Transverse colon (tissue), 4 donors: ENCODE measurements at regions of chr3 and their contacts with region 1.

Region 1: GRCh38 chr3:143644370-143645089 is 203.7 kb downstream of the SLC9A9 start:
- DNase-seq: peak; percentile 65
- H3K4me3 ChIP-seq: no peak overlapping the region
- H3K27ac ChIP-seq: peak overlapping the region in 3 of 4 donors; percentile 4 to 46 (median 29)
- H3K4me1 ChIP-seq: peaks cover 0 to 11% (median 2%) of the 10 kb centered on the region in 4 donors
- H3K27me3 ChIP-seq: no peaks in the 10 kb centered on the region
- CTCF ChIP-seq: peak; percentile 52 to 77 (median 61)
- EP300 ChIP-seq: no peak
- POLR2A ChIP-seq: no peak

Region 2: GRCh38 chr3:143337387-143337786 is 307.1 kb before region 1 on chr3:
- in situ Hi-C with region 1: no loop called
- intact Hi-C with region 1: no loop called
- DNase-seq: no peak
- H3K4me3 ChIP-seq: no peak overlapping the region
- H3K27ac ChIP-seq: no peak overlapping the region
- H3K4me1 ChIP-seq: no peaks in the 10 kb centered on the region
- H3K27me3 ChIP-seq: no peaks in the 10 kb centered on the region
- CTCF ChIP-seq: no peak
- EP300 ChIP-seq: no peak
- POLR2A ChIP-seq: no peak

Region 3: DNA sequence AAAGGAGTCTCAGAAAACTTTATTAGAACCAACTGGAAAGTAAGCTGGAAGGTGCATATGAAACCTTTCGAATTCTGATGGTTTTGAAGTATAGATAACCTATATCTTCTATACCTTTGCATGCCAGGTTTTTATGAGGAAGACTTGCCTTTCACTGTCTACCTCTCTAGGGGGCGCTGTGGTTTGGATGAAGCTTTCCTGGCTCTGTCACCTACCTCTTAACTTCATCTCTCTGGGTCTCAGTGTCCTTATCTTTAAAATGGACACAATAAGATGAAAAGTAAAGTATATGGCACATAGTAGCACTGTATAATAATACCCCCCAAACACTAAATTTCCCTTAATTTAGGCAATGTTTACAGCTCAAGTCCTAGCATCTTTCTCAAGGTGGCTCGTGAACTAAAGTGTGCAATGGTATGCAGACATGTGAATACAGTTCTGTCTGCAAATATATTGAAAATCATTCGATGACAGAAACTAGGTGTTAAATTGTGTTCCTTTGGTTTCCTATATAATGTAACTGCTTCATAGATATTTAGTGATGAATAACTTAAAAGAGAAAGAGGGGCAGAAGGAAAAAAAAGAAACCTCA is 210.6 kb before region 1 on chr3:
- in situ Hi-C with region 1: loop called in 1 of 4 experiments (anchors 10 kb)
- intact Hi-C with region 1: no loop called
- DNase-seq: no peak
- H3K4me3 ChIP-seq: no peak overlapping the region
- H3K27ac ChIP-seq: no peak overlapping the region
- H3K4me1 ChIP-seq: peaks cover 0 to 13% (median 5%) of the 10 kb centered on the region in 4 donors
- H3K27me3 ChIP-seq: no peaks in the 10 kb centered on the region
- CTCF ChIP-seq: peak; percentile 27 to 53 (median 41)
- EP300 ChIP-seq: no peak
- POLR2A ChIP-seq: no peak

Region 4: DNA sequence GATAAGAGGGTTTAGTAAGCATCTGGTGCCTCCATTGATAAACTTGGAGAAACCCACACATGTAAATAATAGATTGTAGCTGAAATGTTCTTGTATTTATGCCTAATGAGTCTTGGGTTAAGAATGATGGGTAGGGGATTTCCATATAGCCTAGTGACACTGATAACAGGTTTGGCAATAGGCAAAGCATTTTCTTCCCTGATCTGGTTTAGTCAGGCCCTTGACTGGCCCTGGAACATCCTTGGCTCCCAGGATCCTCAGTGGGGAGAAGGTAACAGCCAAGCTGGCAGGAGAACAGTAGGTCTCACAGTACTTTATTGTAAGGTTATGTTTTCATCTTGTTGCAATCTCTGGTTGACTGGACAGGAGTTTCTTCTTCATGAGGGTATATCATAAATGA is 555.5 kb after region 1 on chr3:
- in situ Hi-C with region 1: no loop called
- intact Hi-C with region 1: no loop called
- DNase-seq: no peak
- H3K4me3 ChIP-seq: no peak overlapping the region
- H3K27ac ChIP-seq: no peak overlapping the region
- H3K4me1 ChIP-seq: no peaks in the 10 kb centered on the region
- H3K27me3 ChIP-seq: no peaks in the 10 kb centered on the region
- CTCF ChIP-seq: no peak
- EP300 ChIP-seq: no peak
- POLR2A ChIP-seq: no peak